ENCODE measurements at regions of chr15 and their contacts with region 1.

Region 1: GRCh38 chr15:100448492-100448891 is 80.3 kb downstream of the CERS3 start:
- DNase-seq: no peak
- H3K4me3 ChIP-seq: no peak overlapping the region
- H3K27ac ChIP-seq: no peak overlapping the region
- H3K4me1 ChIP-seq: no peaks in the 10 kb centered on the region
- H3K27me3 ChIP-seq: no peaks in the 10 kb centered on the region
- CTCF ChIP-seq: no peak

Region 2: GRCh38 chr15:100733101-100733788 is 284.8 kb after region 1 on chr15:
- intact Hi-C with region 1: no loop called
- DNase-seq: no peak
- H3K4me3 ChIP-seq: no peak overlapping the region
- H3K27ac ChIP-seq: no peak overlapping the region
- H3K4me1 ChIP-seq: peaks cover 0 to 20% (median 12%) of the 10 kb centered on the region in 4 donors
- H3K27me3 ChIP-seq: no peaks in the 10 kb centered on the region
- CTCF ChIP-seq: no peak

Region 3: GRCh38 chr15:101070502-101071273 is 622.2 kb after region 1 on chr15:
- intact Hi-C with region 1: loop called (anchors 10 kb)
- DNase-seq: no peak
- H3K4me3 ChIP-seq: no peak overlapping the region
- H3K27ac ChIP-seq: peak overlapping the region in 1 of 2 donors; percentile 25
- H3K4me1 ChIP-seq: no peaks in the 10 kb centered on the region
- H3K27me3 ChIP-seq: no peaks in the 10 kb centered on the region
- CTCF ChIP-seq: no peak

Region 4: DNA sequence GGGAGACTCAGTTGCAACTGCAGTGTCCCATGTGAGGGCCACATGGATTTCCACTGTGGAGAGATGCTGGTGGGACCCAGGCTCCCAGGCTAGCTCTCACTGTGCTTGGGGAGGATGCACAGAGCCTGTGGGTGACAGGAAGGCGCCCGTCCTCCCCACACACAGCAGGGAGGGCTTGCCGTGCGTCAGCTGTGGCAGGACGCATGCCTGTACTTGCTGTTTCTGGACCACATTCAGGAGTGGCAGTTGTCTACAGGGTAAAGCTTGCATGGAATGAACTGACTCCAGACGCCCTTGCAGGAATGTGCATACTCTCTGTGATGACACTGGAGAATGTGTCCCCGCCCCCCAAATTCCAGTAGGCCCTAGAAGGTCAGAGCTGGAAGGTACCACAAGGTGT is 910.4 kb after region 1 on chr15:
- intact Hi-C with region 1: no loop called
- DNase-seq: peak in 1 of 2 donors; percentile 38
- H3K4me3 ChIP-seq: no peak overlapping the region
- H3K27ac ChIP-seq: no peak overlapping the region
- H3K4me1 ChIP-seq: peaks cover 0 to 6% (median 3%) of the 10 kb centered on the region in 4 donors
- H3K27me3 ChIP-seq: peaks cover 0 to 3% of the 10 kb centered on the region in 2 donors
- CTCF ChIP-seq: no peak

Measured in tibial artery (tissue), 4 donors.